ENCODE measurements at regions of chr19 and their contacts with region 1.

Region 1: GRCh38 chr19:39889872-39890545 is 43.8 kb upstream of the FBL start:
- DNase-seq: no peak
- ATAC-seq: no peak
- H3K4me3 ChIP-seq: no peak overlapping the region
- H3K27ac ChIP-seq: no peak overlapping the region
- H3K4me1 ChIP-seq: no peaks in the 10 kb centered on the region
- H3K27me3 ChIP-seq: peaks cover 0 to 23% (median 1%) of the 10 kb centered on the region in 3 donors
- CTCF ChIP-seq: no peak

Region 2: DNA sequence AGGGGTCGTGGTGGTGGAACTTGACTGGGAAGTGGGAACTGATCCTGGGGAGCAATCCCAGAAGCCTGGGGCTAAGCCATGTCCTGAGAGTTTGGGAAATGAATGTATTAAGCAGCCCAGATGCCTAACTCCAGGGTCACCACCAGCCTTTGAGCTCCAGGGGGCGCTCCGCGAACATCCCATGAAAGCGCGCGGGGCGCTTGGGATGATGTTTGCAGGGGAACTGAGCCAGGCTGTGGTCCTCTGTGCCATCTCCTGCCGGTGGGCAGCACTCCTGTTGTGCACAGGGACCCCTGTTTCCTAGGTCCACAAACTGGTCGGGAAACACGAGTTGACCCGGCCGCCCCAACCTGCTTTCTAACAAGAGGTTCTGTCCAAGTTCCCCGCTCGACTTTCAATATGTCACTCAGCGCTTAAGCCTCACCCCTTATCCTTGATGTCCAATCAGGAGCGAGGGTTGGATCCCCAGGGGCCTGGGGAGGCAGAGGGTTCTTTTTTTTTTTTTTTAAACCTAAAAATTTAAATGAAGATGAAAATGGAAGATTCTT is 96.9 kb before region 1 on chr19:
- intact Hi-C with region 1: no loop called
- DNase-seq: peak; percentile 82 to 87
- ATAC-seq: peak; percentile 95 to 99 (median 98)
- H3K4me3 ChIP-seq: peak overlapping the region; percentile 77
- H3K27ac ChIP-seq: no peak overlapping the region
- H3K4me1 ChIP-seq: no peaks in the 10 kb centered on the region
- H3K27me3 ChIP-seq: no peaks in the 10 kb centered on the region
- CTCF ChIP-seq: peak; percentile 92

Region 3: GRCh38 chr19:39878398-39878797 is 11.6 kb before region 1 on chr19:
- intact Hi-C with region 1: loop called in 1 of 2 experiments (anchors 2 kb)
- DNase-seq: no peak
- ATAC-seq: no peak
- H3K4me3 ChIP-seq: no peak overlapping the region
- H3K27ac ChIP-seq: no peak overlapping the region
- H3K4me1 ChIP-seq: no peaks in the 10 kb centered on the region
- H3K27me3 ChIP-seq: peaks cover 0 to 7% (median 0%) of the 10 kb centered on the region in 3 donors
- CTCF ChIP-seq: no peak